Dendritic cell treated with granulocyte-macrophage colony-stimulating factor and Interleukin-4, amounts not matched to agents 40 ng/mL and 50 ng/mL, for 4 days (primary cell): ENCODE measurements at regions of chr12 and their contacts with region 1.

Region 1: GRCh38 chr12:112906712-112907414 is at the start of gene OAS1:
- H3K4me3 Mint-ChIP-seq: peak within 1 kb of the TSS; percentile 83
- H3K27ac Mint-ChIP-seq: peak within 1 kb of the TSS; percentile 90
- H3K4me1 Mint-ChIP-seq: peaks cover 76% of the 10 kb centered on the region
- H3K27me3 Mint-ChIP-seq: no peaks in the 10 kb centered on the region

Region 2: GRCh38 chr12:112937741-112938719 is 31.2 kb after region 1 on chr12 and contains the start of gene OAS3:
- intact Hi-C with region 1: loop called (anchors 1 kb)
- H3K4me3 Mint-ChIP-seq: peak within 1 kb of the TSS; percentile 85
- H3K27ac Mint-ChIP-seq: peak within 1 kb of the TSS; percentile 87
- H3K4me1 Mint-ChIP-seq: peaks cover 28% of the 10 kb centered on the region
- H3K27me3 Mint-ChIP-seq: peaks cover 4% of the 10 kb centered on the region

Region 3: DNA sequence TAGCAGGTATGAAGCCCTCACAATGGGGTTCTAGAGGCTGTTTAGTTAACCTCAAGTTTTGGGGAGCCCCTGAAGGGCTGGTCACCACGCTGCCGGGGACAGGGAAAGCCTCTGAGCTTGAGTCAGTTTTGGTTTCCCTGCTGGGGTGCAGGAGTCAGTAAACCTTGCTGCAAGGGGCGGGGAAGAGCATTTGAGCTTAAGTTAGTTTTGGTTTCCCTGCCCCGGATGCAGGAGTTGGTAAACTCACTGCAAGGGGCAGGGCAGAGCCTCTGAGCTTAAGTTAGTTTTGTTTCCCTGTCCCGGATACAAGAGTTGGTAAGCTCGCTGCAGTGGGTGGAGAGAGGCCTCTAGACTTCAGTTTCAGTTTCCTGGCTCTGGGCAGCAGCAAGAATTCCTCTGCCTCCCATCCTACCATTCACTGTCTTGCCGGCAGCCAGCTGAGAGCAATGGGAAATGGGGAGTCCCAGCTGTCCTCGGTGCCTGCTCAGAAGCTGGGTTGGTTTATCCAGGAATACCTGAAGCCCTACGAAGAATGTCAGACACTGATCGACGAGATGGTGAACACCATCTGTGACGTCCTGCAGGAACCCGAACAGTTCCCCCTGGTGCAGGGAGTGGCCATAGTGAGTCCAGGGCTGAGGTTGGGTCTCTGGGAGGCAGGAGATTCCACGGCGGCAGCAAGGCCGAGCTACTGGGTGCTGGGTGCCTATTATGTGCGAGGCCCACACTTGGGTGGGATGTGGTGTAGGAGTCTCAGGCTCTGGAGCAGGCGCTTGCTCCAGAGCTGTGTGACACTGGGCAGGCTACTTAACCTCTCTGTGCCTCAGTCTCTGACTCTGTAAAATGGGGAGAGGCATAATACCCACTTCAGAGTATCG is 71.5 kb after region 1 on chr12 and contains the start of gene OAS2:
- intact Hi-C with region 1: loop called (anchors 2 kb)
- H3K4me3 Mint-ChIP-seq: peak within 1 kb of the TSS; percentile 92
- H3K27ac Mint-ChIP-seq: peak within 1 kb of the TSS; percentile 99
- H3K4me1 Mint-ChIP-seq: peaks cover 66% of the 10 kb centered on the region
- H3K27me3 Mint-ChIP-seq: no peaks in the 10 kb centered on the region

Region 4: GRCh38 chr12:113142173-113142885 is 235.5 kb after region 1 on chr12:
- intact Hi-C with region 1: loop called (anchors 5 kb)
- H3K4me3 Mint-ChIP-seq: peak overlapping the region; percentile 24
- H3K27ac Mint-ChIP-seq: peak overlapping the region; percentile 98
- H3K4me1 Mint-ChIP-seq: peaks cover 63% of the 10 kb centered on the region
- H3K27me3 Mint-ChIP-seq: no peaks in the 10 kb centered on the region